ENCODE measurements at regions of chr2 and their contacts with region 1.

Region 1: DNA sequence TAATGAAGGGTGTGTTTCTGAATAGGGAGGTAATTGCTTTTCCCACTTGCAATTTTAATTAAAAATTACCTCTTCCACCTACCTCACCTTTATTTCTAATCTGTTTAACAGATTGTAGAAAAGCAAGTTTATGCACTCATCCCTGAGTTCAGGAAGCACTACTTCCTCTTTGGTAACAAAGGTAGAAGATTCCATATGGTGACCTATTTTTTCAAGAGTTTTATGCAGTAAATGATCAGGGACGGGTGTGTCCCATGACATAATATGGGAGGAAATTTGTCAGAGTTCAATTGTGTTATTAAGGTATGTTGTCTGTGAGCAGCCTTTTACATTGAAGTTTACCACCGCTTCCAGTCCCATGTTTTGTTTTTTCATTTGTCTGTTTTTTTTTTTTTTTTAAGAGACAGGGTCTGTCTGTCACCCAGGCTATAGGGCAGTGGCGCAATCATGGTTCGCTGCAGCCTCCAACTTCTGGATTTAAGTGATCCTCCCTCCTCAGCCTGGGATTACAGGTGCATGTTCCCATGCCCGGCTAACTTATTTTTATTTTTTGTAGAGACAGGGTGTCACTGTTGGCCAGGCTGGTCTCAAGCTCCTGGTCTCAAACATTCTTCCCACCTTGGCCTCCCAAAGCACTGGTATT is 68.2 kb downstream of the ASAP2 start:
- DNase-seq: no peak

Region 2: DNA sequence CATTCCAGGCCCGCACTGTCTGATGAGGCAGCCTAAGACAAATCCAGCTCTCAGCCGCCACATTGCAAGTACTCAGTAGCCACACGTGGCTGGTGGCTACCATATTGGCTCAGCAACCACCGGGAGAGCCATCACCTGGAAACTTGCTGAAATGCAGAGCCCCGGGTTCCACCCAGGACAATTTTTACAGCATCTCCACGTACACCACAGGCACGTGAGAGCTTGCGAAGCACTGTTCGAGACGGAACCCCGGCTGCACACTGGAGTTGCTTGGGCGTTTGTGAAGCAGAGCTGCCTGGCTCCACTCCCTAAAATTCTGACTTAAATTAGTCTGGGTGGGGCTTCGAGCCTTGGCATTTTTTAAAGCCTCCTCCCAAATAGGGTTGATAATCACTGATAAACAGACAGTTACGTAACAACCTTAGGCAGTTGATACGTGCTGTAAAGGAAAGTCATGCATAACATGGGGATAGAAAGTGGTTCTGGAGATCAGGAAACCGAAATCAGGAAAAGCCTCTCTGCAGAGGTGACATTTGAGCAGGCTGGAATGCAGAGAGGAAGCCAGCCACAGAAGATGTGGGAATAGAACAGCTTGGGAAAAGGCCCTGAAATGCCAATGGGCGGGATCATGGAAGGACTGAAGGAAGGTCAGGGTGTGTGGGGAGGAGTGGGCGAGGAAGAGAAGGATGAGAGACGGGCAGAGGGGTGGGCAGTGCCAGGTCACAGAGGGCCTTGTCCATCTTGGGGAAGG is 62.0 kb before region 1 on chr2:
- intact Hi-C with region 1: loop called in 1 of 2 experiments (anchors 10 kb)
- DNase-seq: peak; percentile 88

Region 3: DNA sequence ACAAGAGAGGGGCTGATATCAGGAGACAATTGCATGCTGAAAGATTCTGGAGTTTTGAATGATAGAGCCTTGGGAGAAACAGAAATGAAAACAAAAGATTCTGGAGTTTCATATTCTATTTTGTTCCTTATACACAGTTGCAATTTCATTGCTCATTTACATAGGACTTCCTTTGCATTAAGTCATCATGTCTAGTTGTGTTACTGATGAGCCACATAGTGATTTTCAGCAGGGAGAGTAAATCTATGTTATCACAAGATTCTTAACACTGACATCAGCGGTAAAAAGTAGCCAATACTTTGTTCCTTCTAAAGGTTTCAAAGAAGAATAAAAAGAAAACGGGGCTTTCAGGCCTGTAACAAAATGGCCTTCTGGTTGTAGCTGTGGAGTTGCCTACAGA is 273.7 kb after region 1 on chr2:
- intact Hi-C with region 1: no loop called
- DNase-seq: no peak